ENCODE measurements at regions of chr2 and their contacts with region 1.

Region 1: DNA sequence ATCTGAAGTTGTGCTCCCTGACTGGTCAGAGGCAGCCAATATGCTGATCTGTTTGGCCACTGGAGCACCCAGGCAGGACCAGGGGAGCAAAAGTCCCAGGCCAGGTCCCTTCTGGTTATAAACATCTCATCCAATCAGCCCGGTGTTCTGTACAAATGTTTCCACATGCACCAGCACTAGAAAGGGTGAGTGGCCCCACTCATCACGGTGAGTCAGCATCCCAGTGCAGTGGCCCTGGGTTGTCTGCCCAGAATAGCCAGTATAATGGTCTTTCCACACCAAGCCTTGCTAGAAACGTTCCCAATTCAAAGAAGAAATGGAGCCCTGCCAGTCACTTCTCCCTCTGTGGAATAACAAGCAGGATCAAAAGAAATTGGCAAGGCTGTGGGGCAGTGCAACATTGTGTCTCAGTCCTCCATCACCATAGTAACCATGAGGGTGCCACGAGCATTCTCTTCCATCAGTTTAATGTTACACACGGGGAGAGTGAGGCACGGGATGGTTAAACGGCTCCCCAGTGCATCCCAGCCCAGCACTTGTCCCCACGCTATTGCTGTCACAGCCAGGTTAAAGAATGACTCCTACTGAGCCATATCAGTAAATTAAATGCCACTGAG is 174.9 kb downstream of the SEPTIN10 start:
- DNase-seq: peak; percentile 83
- ATAC-seq: peak; percentile 76
- H3K4me3 ChIP-seq: no peak overlapping the region
- H3K27ac ChIP-seq: peak overlapping the region; percentile 85 to 94
- H3K4me1 ChIP-seq: peaks cover 0 to 5% of the 10 kb centered on the region in 2 donors
- H3K27me3 ChIP-seq: no peaks in the 10 kb centered on the region

Region 2: GRCh38 chr2:109173311-109174171 is 265.3 kb before region 1 on chr2:
- intact Hi-C with region 1: loop called in 1 of 2 experiments (anchors 2 kb)
- DNase-seq: peak; percentile 90 to 93
- ATAC-seq: peak; percentile 86
- H3K4me3 ChIP-seq: no peak overlapping the region
- H3K27ac ChIP-seq: peak overlapping the region; percentile 97 to 99
- H3K4me1 ChIP-seq: peaks cover 10 to 16% of the 10 kb centered on the region in 2 donors
- H3K27me3 ChIP-seq: no peaks in the 10 kb centered on the region

Region 3: DNA sequence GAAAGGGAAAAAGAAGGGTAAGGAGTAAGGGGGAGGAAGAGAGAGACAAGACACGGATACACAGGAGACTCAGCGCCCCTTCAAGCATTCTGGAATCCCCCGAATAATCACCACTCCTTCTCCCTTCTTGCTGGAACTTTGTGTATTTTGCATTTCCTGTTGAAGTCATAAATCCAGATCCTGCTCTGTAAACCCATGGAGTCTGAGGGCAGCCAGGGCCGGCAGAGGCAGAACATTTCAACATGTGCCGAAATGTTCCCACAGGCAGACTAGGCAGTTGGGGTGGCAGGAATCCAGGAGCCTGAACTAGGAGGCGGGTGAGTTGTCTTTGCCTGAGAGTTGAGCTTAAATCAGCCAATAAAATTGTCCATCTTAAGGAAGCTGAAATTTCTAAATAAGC is 116.8 kb before region 1 on chr2:
- intact Hi-C with region 1: loop called (anchors 2 to 5 kb)
- DNase-seq: peak; percentile 93 to 94
- ATAC-seq: peak; percentile 79
- H3K4me3 ChIP-seq: no peak overlapping the region
- H3K27ac ChIP-seq: peak overlapping the region; percentile 97
- H3K4me1 ChIP-seq: peaks cover 4 to 9% of the 10 kb centered on the region in 2 donors
- H3K27me3 ChIP-seq: no peaks in the 10 kb centered on the region

Region 4: DNA sequence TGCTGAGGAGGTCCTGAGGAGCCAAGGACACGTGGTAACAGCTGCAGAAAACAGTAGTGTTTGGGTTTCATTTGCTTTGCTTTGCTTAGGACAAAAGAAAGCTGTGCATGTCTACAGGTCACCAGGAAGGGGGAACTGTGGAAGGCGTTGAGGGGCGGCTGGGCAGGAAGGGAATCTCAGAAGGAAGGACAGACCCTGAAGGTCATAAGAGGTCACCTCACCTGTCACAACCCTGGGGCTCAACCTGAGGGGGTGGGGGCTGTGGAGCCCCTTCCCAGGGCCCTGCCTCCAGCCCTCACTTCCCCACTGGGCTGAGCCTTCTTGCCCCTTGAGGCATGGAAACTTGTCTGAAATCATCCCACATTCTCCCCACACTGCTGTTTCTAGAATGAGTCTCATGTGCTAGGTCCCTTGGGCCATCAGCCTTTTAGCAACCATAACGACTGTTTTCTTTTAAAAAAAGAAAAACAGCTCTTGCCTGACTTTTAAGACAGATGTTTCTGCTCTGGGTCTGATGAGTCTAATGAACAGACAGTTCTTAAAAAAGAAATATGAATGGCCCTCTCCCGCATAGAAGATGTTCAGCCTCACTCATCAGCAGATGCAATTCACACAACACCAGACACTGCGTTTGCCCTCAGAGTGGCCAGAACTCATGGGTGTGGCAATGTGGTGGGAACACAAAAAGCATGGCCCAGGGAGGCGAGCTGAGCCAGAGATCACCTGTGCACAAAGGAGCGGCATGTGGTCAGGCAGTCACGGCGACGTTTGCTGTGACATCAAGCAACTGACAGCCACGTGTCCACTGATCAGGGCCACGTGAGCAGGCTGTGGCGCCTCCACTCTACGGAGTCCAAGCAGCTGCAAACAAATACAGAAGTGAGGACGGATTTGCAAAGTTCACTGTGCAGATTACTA is 90.9 kb after region 1 on chr2:
- intact Hi-C with region 1: no loop called
- DNase-seq: no peak
- ATAC-seq: no peak
- H3K4me3 ChIP-seq: no peak overlapping the region
- H3K27ac ChIP-seq: no peak overlapping the region
- H3K4me1 ChIP-seq: no peaks in the 10 kb centered on the region
- H3K27me3 ChIP-seq: no peaks in the 10 kb centered on the region

Measured in aorta (tissue), 5 donors.